Activated CD8-positive, alpha-beta memory T cell treated with anti-CD3 and anti-CD28 coated beads, Interleukin-2, amount 10 ng/mL, durations not matched to agents 7 days and 5 days (primary cell): ENCODE measurements at regions of chr15 and their contacts with region 1.

Region 1: DNA sequence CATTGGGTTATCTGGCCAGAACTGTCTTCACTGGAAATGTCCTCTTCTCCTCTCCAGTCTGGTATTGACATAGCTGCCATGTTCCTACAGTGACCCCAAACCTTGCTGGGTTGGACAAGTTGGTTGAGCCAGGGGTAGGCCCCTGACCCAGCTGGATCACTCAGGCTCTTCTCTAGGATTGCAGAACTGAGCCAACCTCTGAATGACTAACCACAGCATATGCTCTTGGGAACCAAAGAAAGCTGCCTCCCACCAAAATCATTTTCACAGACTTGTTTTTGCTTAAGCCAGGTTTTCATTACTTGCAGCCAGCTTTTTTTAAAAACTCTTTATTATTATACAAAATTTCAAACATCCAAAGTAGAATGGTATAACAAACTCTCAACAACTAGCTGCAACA is 41.4 kb downstream of the FSIP1 start:
- DNase-seq: no peak
- ATAC-seq: no peak
- H3K4me3 Mint-ChIP-seq: no peak overlapping the region
- H3K27ac Mint-ChIP-seq: no peak overlapping the region
- H3K4me1 Mint-ChIP-seq: peaks cover 3% of the 10 kb centered on the region
- H3K27me3 Mint-ChIP-seq: peaks cover 14% of the 10 kb centered on the region

Region 2: DNA sequence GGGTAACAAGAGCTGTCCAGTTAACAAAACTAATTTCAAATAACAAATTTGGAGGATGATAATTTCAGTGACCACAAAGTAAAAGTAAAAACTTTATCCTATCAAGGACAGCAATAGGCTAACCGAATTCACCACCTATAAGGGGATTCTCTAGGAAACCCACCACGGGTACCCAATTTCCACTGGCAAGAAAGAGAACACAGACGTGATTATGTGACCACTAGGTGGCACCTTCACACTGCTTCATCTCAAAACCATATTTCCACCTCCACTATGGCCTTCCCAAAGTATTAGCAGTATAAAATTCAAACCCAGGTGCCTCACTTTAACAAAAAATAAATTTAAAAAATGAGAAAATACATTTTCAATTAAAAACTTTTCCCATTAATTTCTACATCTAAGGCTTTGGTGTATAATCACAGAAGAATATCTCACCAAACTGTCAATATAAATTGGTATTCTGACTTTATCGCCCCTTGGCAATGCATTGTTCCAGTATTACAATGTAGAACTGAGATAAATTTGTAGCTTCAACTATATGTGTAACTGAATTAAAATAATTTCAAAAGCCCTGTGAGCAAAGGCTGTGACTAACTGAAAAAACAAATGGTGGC is 55.2 kb before region 1 on chr15:
- CTCF ChIA-PET with region 1: interaction called, 11 read pairs
- DNase-seq: no peak
- ATAC-seq: peak; percentile 55
- H3K4me3 Mint-ChIP-seq: no peak overlapping the region
- H3K27ac Mint-ChIP-seq: no peak overlapping the region
- H3K4me1 Mint-ChIP-seq: peaks cover 4% of the 10 kb centered on the region
- H3K27me3 Mint-ChIP-seq: no peaks in the 10 kb centered on the region

Region 3: DNA sequence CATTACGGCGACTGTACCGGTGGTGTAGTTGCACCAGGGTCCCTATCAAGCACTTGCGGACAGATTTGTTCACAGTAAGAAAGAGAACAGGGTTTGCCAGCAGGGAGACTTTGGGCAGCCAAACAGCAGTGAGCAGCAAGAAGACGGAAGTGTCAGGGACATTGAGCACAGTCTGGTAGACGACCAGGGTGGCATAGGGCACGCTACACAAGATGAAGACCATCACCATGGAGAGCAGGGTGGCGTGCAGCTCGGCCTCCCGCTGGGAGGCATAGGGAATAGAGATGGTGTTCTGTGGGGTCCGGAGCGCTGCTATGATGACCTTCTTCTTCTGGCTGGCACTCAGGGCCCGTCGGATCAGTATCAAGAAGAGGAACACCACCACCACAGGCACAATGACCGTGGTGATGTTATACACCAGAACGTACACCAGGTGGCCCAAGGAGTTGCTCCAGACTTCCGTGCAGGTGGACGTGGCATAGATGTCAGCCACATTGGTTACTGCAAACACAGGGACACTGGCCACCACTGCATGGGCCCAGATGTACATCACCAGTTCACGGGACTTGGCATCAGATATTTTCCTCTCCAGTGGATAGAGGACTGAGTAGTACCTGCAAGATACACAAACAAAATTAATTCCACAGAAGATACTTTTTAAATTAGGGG is 60.5 kb after region 1 on chr15:
- CTCF ChIA-PET with region 1: no interaction called
- DNase-seq: no peak
- ATAC-seq: peak; percentile 68
- H3K4me3 Mint-ChIP-seq: no peak overlapping the region
- H3K27ac Mint-ChIP-seq: no peak overlapping the region
- H3K4me1 Mint-ChIP-seq: no peaks in the 10 kb centered on the region
- H3K27me3 Mint-ChIP-seq: peaks cover 24% of the 10 kb centered on the region